ENCODE measurements at regions of chr1 and their contacts with region 1.

Region 1: DNA sequence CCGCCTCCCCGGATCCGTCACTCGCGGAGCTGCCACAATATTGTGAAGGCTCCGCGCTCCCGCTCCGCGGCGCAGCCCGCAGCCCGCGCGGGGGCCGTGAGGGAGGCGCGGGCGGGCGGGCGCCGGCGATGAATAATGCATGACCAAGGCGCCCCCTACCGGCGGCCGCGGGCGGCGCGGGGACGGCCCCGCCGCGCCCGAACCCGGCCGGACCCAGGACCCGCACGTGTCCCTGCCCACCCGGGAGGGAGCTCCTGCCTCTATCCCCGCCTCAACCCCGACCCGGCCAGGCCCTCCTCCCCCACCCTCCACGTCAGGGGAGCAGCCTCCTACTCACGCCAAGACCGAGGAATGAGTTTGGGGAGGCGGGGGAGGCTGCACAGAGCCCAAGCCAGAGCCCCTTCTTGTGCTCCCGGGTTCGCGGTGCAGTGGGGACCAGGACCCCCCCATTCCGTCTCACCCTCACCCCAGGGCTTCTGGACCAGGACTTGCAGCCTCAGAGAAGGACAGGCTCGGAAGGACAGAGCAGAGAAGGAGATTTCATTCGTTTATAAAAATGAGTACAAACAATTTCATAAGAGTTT is 70.8 kb upstream of the CASZ1 start:
- DNase-seq: no peak

Region 2: GRCh38 chr1:10514490-10515235 is 352.6 kb before region 1 on chr1:
- intact Hi-C with region 1: loop called (anchors 5 kb)
- DNase-seq: no peak

Region 3: DNA sequence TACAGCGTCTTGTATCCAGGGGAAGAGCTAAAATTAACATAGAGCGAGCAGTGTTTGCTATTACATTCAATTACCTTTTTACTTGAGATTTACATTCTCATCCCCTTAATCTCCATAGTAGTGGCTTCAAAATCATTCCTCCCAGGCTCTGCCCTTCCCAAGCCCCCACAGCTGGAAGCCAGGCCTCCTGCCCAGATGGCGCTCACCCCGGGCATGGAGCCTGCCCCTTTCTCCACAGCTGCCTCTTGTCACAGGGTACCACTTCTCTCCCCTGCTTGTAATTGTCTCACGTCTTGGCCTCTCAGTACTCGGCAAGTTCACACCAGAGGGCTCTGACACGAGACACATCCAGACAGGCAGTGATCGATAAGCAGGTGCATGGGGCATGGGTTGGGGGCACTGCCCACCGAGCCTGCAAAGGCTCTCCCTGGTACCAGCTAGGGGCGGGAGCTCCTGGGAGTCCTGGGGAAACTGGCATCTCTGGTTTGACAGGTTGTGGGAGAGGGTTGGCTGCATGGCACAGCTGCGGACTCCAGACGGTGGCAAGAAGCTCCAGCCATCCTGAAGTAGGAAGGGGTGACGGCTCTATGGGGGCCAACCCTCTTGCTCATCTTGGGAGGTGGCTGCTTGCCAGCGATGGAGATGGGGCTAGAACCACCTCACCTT is 90.9 kb before region 1 on chr1:
- intact Hi-C with region 1: no loop called
- DNase-seq: no peak